Endothelial cell of umbilical vein (primary cell): ENCODE measurements at regions of chrX and their contacts with region 1.

Region 1: DNA sequence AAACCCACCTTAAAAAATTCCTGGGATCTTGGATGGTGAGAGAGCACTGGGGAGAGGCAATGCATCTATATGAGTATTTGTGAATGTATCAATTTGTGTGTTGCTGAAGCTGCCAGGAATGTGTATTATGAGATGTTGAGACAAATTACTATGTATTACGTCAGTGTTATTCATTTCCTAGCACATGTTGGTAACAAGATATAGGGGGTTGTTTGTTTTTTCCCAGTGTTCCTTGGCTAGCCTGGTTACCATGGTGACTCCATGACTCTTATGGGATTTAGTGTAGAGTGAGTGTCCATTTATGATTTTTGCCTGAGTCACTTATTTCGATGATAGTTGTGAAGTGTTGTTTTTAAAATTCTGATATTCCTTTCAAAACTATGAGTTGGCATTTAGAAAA is 65.6 kb downstream of the RAB40A start:
- DNase-seq: peak; percentile 93
- H3K4me3 ChIP-seq: no peak overlapping the region
- H3K27ac ChIP-seq: peak overlapping the region; percentile 96
- H3K4me1 ChIP-seq: peaks cover 16% of the 10 kb centered on the region
- H3K27me3 ChIP-seq: no peaks in the 10 kb centered on the region
- CTCF ChIP-seq: no peak
- POLR2A ChIP-seq: no peak

Region 2: GRCh38 chrX:103376118-103376978 is 77.3 kb before region 1 on chrX and contains the start of gene BEX3:
- CTCF ChIA-PET with region 1: no interaction called
- POLR2A ChIA-PET with region 1: no interaction called
- dilution Hi-C with region 1: no loop called
- intact Hi-C with region 1: loop called (anchors 2 kb)
- DNase-seq: peak; percentile 55
- H3K4me3 ChIP-seq: peak within 1 kb of the TSS; percentile 74 to 91 (median 91)
- H3K27ac ChIP-seq: peak within 1 kb of the TSS; percentile 89
- H3K4me1 ChIP-seq: peaks cover 6% of the 10 kb centered on the region
- H3K27me3 ChIP-seq: no peaks in the 10 kb centered on the region
- CTCF ChIP-seq: no peak
- POLR2A ChIP-seq: peak; percentile 65
- total RNA-seq, gene BEX3: 227 and 233 TPM in 2 replicates

Region 3: GRCh38 chrX:103398421-103398864 is 55.2 kb before region 1 on chrX:
- CTCF ChIA-PET with region 1: no interaction called
- POLR2A ChIA-PET with region 1: no interaction called
- dilution Hi-C with region 1: no loop called
- intact Hi-C with region 1: loop called (anchors 1 kb)
- DNase-seq: peak; percentile 73
- H3K4me3 ChIP-seq: no peak overlapping the region
- H3K27ac ChIP-seq: peak overlapping the region; percentile 92
- H3K4me1 ChIP-seq: peaks cover 30% of the 10 kb centered on the region
- H3K27me3 ChIP-seq: no peaks in the 10 kb centered on the region
- CTCF ChIP-seq: no peak
- POLR2A ChIP-seq: no peak

Region 4: GRCh38 chrX:103404231-103405208 is 49.1 kb before region 1 on chrX:
- CTCF ChIA-PET with region 1: no interaction called
- POLR2A ChIA-PET with region 1: no interaction called
- dilution Hi-C with region 1: no loop called
- intact Hi-C with region 1: loop called (anchors 1 kb)
- DNase-seq: peak; percentile 79
- H3K4me3 ChIP-seq: peak overlapping the region; percentile 19 to 62 (median 41)
- H3K27ac ChIP-seq: peak overlapping the region; percentile 71
- H3K4me1 ChIP-seq: peaks cover 11% of the 10 kb centered on the region
- H3K27me3 ChIP-seq: no peaks in the 10 kb centered on the region
- CTCF ChIP-seq: no peak
- POLR2A ChIP-seq: no peak

Region 5: GRCh38 chrX:103442536-103442901 is 11.1 kb before region 1 on chrX:
- CTCF ChIA-PET with region 1: no interaction called
- POLR2A ChIA-PET with region 1: no interaction called
- dilution Hi-C with region 1: no loop called
- intact Hi-C with region 1: loop called (anchors 1 kb)
- DNase-seq: peak; percentile 61
- H3K4me3 ChIP-seq: no peak overlapping the region
- H3K27ac ChIP-seq: peak overlapping the region; percentile 63
- H3K4me1 ChIP-seq: peaks cover 12% of the 10 kb centered on the region
- H3K27me3 ChIP-seq: no peaks in the 10 kb centered on the region
- CTCF ChIP-seq: no peak
- POLR2A ChIP-seq: no peak